Ovary (tissue), 10 donors: ENCODE measurements at regions of chr9 and their contacts with region 1.

Region 1: DNA sequence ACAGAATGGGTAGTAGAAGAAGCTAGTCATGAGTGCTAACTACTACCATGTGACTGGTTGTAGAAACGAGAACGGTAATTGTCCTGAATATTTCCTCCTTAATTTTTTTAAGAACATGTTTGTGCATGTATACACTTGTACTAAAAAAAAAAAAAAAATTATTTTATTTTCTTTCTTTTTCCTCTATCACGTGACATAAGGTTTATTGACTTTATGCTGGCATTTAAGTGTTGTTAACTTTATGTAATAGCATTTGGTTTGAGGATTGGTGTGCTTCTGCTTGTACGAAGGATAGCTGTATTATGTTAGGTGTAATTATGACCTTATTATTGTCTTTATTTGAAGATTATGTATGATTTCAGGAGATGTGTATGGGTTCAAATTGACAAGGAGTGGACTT is 349.1 kb upstream of the PTPRD start:
- DNase-seq: no peak
- H3K4me3 ChIP-seq: no peak overlapping the region
- H3K27ac ChIP-seq: no peak overlapping the region
- H3K4me1 ChIP-seq: no peaks in the 10 kb centered on the region
- H3K27me3 ChIP-seq: no peaks in the 10 kb centered on the region
- CTCF ChIP-seq: no peak
- EP300 ChIP-seq: no peak
- POLR2A ChIP-seq: no peak

Region 2: GRCh38 chr9:10855852-10856251 is 106.0 kb before region 1 on chr9:
- intact Hi-C with region 1: no loop called
- DNase-seq: no peak
- H3K4me3 ChIP-seq: no peak overlapping the region
- H3K27ac ChIP-seq: no peak overlapping the region
- H3K4me1 ChIP-seq: no peaks in the 10 kb centered on the region
- H3K27me3 ChIP-seq: no peaks in the 10 kb centered on the region
- CTCF ChIP-seq: no peak
- EP300 ChIP-seq: no peak
- POLR2A ChIP-seq: no peak

Region 3: DNA sequence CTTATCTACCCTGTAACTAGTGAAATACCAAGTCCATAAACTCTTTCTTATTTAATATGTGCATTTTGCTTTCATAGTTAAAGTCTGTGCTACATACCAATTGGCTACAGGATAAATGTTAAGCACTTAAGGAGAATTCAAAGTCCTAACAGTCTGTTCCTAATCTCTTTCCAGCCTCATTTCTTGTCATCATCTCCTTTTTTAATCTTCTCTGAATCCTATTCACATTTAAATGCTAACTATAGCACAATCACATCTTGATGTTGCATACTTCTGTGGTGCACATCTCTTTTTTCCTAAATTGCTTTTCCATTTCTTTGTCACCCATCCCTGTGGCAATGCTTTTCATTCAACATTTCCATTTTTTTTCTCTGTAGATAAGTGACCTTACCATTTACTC is 735.2 kb after region 1 on chr9:
- intact Hi-C with region 1: loop called in 1 of 4 experiments (anchors 5 kb)
- DNase-seq: no peak
- H3K4me3 ChIP-seq: no peak overlapping the region
- H3K27ac ChIP-seq: no peak overlapping the region
- H3K4me1 ChIP-seq: no peaks in the 10 kb centered on the region
- H3K27me3 ChIP-seq: no peaks in the 10 kb centered on the region
- CTCF ChIP-seq: no peak
- EP300 ChIP-seq: no peak
- POLR2A ChIP-seq: no peak